ENCODE measurements at regions of chr6 and their contacts with region 1.

Region 1: GRCh38 chr6:111605100-111605751 is 452 bp downstream of the TRAF3IP2 start:
- DNase-seq: peak in 1 of 2 donors; percentile 93
- H3K4me3 ChIP-seq: peak overlapping the region; percentile 64 to 65
- H3K27ac ChIP-seq: peak overlapping the region; percentile 92 to 96
- H3K4me1 ChIP-seq: peaks cover 13 to 35% of the 10 kb centered on the region in 2 donors
- H3K27me3 ChIP-seq: no peaks in the 10 kb centered on the region
- CTCF ChIP-seq: no peak

Region 2: DNA sequence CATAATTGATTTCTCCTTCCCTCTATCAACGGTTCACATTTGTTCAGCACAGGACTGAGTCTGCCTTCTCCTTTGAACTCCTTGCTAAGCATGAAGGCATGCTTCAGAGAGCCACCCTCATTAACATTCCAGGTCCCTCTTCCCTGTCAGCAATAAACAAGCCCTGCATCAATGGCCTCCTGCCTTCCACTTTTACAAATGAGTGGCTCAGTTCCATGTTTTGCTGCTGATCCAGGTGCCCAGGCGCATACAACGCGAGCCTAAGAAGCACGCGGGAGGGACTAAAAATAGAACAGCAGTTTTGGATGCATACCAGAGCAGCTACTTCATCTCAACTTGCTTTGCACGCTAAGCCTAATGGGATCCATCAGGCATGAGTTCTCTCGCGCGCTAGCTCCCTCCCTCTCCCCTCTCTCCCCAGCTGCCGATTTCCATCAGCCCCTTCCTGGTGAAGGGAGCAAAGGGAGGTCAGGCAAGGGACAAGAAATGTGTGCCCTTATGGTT is 52.9 kb before region 1 on chr6:
- intact Hi-C with region 1: loop called (anchors 1 kb)
- DNase-seq: peak in 1 of 2 donors; percentile 87
- H3K4me3 ChIP-seq: peak overlapping the region in 1 of 2 donors; percentile 37
- H3K27ac ChIP-seq: peak overlapping the region; percentile 66 to 74
- H3K4me1 ChIP-seq: peaks cover 7 to 25% of the 10 kb centered on the region in 2 donors
- H3K27me3 ChIP-seq: no peaks in the 10 kb centered on the region
- CTCF ChIP-seq: no peak

Region 3: GRCh38 chr6:111591104-111591900 is 13.9 kb before region 1 on chr6:
- intact Hi-C with region 1: loop called (anchors 1 kb)
- DNase-seq: peak; percentile 55 to 95
- H3K4me3 ChIP-seq: no peak overlapping the region
- H3K27ac ChIP-seq: peak overlapping the region; percentile 82 to 84
- H3K4me1 ChIP-seq: peaks cover 11 to 58% of the 10 kb centered on the region in 2 donors
- H3K27me3 ChIP-seq: no peaks in the 10 kb centered on the region
- CTCF ChIP-seq: no peak

Region 4: GRCh38 chr6:111642463-111643158 is 37.4 kb after region 1 on chr6:
- intact Hi-C with region 1: no loop called
- DNase-seq: peak in 1 of 2 donors; percentile 80
- H3K4me3 ChIP-seq: no peak overlapping the region
- H3K27ac ChIP-seq: no peak overlapping the region
- H3K4me1 ChIP-seq: no peaks in the 10 kb centered on the region
- H3K27me3 ChIP-seq: no peaks in the 10 kb centered on the region
- CTCF ChIP-seq: peak; percentile 51 to 69 (median 59)

Region 5: DNA sequence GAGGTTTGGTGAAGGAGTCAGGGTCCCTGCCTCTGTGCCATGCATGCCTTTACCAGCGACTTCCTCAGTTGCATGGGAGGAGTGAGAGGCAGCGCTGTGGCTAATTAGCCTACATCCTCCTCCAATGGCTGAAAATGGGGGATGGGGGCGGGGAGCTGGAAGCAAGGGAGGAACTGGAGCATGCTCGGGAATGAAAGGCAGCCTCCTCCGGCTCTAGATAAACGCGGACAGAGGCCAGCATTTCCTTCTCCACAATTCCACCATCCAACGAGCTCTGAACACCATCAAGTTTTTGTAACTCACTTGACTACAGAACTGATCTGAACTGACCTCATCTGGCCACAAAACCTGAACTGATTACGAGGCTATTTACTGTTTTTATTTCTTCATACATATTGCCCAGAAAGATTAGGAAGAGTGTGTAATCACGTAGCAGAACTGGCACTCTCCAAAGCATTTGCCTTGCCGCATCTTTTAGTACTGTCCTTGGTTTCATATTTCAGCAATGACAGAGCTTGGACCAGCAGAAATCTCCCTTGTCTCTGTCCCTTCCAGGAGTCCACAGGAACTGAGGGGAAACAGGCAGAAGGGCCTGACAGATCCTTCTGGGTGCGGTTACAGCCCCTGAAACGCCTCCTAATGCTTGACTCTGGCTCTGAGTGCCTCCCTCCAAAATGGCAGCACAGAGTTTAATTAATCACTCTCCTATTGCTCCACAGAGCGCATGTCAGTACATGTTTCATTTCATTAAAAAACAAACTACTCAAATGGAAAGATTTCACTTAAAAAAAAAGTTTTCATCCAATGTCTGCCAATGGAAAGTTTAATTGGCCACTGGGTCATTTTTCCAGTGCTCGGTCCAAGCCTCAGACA is 58.7 kb after region 1 on chr6:
- intact Hi-C with region 1: loop called (anchors 2 kb)
- DNase-seq: peak in 1 of 2 donors; percentile 75
- H3K4me3 ChIP-seq: peak overlapping the region in 1 of 2 donors; percentile 36
- H3K27ac ChIP-seq: peak overlapping the region; percentile 59 to 85
- H3K4me1 ChIP-seq: peaks cover 15 to 45% of the 10 kb centered on the region in 2 donors
- H3K27me3 ChIP-seq: no peaks in the 10 kb centered on the region
- CTCF ChIP-seq: no peak

Region 6: GRCh38 chr6:112037783-112038216 is 432.6 kb after region 1 on chr6:
- intact Hi-C with region 1: loop called (anchors 2 kb)
- DNase-seq: peak; percentile 54 to 96
- H3K4me3 ChIP-seq: no peak overlapping the region
- H3K27ac ChIP-seq: peak overlapping the region; percentile 83 to 93
- H3K4me1 ChIP-seq: peaks cover 5 to 29% of the 10 kb centered on the region in 2 donors
- H3K27me3 ChIP-seq: no peaks in the 10 kb centered on the region
- CTCF ChIP-seq: no peak

Measured in ascending aorta (tissue), 2 donors.